ENCODE measurements at regions of chr12 and their contacts with region 1.

Region 1: GRCh38 chr12:131894313-131894860 is at the start of gene ULK1:
- DNase-seq: peak; percentile 82 to 84 (median 83)
- H3K4me3 ChIP-seq: peak within 1 kb of the TSS; percentile 63 to 94 (median 89)
- H3K4me3 Mint-ChIP-seq: peak within 1 kb of the TSS; percentile 87 to 93
- H3K27ac ChIP-seq: peak within 1 kb of the TSS; percentile 55 to 94
- H3K27ac Mint-ChIP-seq: peak within 1 kb of the TSS; percentile 87 to 95 (median 91)
- H3K4me1 ChIP-seq: peaks cover 20 to 24% of the 10 kb centered on the region in 2 donors
- H3K4me1 Mint-ChIP-seq: peaks cover 21% of the 10 kb centered on the region
- H3K27me3 ChIP-seq: no peaks in the 10 kb centered on the region
- H3K27me3 Mint-ChIP-seq: peaks cover 0 to 4% (median 3%) of the 10 kb centered on the region in 3 donors
- CTCF ChIP-seq: no peak
- polyA plus RNA-seq, gene ULK1: 1.0 to 75.1 (median 1.3) TPM

Region 2: GRCh38 chr12:131755305-131756113 is 138.9 kb before region 1 on chr12:
- intact Hi-C with region 1: no loop called
- DNase-seq: peak; percentile 9 to 27 (median 11)
- H3K4me3 ChIP-seq: no peak overlapping the region
- H3K4me3 Mint-ChIP-seq: no peak overlapping the region
- H3K27ac ChIP-seq: no peak overlapping the region
- H3K27ac Mint-ChIP-seq: no peak overlapping the region
- H3K4me1 ChIP-seq: no peaks in the 10 kb centered on the region
- H3K4me1 Mint-ChIP-seq: no peaks in the 10 kb centered on the region
- H3K27me3 ChIP-seq: no peaks in the 10 kb centered on the region
- H3K27me3 Mint-ChIP-seq: no peaks in the 10 kb centered on the region
- CTCF ChIP-seq: peak; percentile 63

Region 3: DNA sequence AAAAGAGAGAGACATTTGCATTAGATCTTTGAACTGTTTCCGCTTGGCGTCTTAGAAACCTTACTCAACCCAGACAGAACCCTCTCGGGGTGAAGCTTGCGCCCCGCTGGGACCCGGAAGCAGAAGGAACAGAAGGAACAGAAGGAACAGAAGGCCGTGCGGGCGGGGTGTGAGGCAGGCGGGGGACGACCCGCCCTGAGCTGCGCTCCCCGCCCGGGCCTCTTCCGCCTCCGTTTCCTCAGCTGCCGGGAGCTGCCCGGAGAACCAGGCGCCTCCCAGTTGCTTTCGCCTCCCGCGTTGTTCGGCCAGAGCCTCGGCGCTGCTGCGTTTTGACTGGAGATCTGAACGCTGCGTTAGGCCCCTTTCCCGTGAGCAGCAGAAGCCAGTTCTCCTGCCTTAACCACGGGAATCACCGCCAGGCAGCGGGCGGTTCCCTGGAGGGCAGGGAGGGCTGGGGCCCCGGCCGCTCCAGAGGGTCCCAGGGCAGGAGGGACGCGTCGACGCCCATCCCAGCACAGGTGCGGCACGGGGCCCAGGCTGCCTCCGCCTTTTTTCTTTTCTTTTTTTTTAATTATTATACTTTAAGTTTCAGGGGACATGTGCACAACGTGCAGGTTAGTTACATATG is 85.5 kb before region 1 on chr12:
- intact Hi-C with region 1: no loop called
- DNase-seq: peak; percentile 61 to 72 (median 70)
- H3K4me3 ChIP-seq: peak overlapping the region; percentile 12 to 60 (median 35)
- H3K4me3 Mint-ChIP-seq: peak overlapping the region; percentile 63 to 80
- H3K27ac ChIP-seq: peak overlapping the region; percentile 51 to 61
- H3K27ac Mint-ChIP-seq: peak overlapping the region; percentile 30 to 90 (median 87)
- H3K4me1 ChIP-seq: peaks cover 35 to 43% of the 10 kb centered on the region in 2 donors
- H3K4me1 Mint-ChIP-seq: peaks cover 32% of the 10 kb centered on the region
- H3K27me3 ChIP-seq: no peaks in the 10 kb centered on the region
- H3K27me3 Mint-ChIP-seq: peaks cover 0 to 6% (median 3%) of the 10 kb centered on the region in 3 donors
- CTCF ChIP-seq: no peak

Region 4: DNA sequence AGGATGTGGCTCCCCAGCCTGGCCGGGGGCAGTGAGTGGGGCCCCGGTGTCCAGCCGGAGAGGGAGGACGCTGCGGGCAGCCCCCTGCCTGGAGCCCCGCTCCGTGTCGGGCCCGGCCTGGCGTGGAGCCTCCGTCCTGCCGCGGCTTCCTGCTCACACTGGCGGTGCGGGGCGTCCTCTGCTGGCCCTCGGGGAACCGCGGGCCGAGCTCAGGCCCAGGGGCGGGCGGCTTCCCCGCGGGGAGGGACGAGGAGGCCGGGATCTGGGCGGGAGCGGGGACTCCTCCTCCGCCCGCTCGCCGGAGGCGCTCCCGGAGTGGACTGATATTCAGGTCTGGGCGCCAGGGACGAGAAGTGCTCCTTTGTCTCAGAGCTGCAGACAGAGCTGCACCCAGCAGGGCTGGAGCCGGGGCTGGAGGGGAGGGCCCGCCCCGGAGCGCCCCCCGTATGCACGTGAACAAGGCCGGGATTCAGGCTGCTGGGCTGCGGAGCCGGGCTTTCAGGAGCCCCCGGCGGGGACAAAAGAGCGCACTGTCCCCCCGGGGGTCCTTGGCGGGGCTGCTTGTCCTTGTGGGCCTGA is 64.0 kb before region 1 on chr12:
- intact Hi-C with region 1: no loop called
- DNase-seq: peak; percentile 58 to 69 (median 66)
- H3K4me3 ChIP-seq: peak overlapping the region; percentile 64 to 94 (median 69)
- H3K4me3 Mint-ChIP-seq: peak overlapping the region; percentile 69 to 81
- H3K27ac ChIP-seq: no peak overlapping the region
- H3K27ac Mint-ChIP-seq: no peak overlapping the region
- H3K4me1 ChIP-seq: peaks cover 29 to 38% of the 10 kb centered on the region in 2 donors
- H3K4me1 Mint-ChIP-seq: peaks cover 38% of the 10 kb centered on the region
- H3K27me3 ChIP-seq: peaks cover 0 to 15% of the 10 kb centered on the region in 2 donors
- H3K27me3 Mint-ChIP-seq: peaks cover 2 to 35% (median 35%) of the 10 kb centered on the region in 3 donors
- CTCF ChIP-seq: peak; percentile 88

Region 5: GRCh38 chr12:131860562-131861291 is 33.7 kb before region 1 on chr12:
- intact Hi-C with region 1: loop called (anchors 5 kb)
- DNase-seq: peak; percentile 95 to 96 (median 95)
- H3K4me3 ChIP-seq: peak overlapping the region; percentile 35 to 71 (median 37)
- H3K4me3 Mint-ChIP-seq: peak overlapping the region; percentile 78 to 89
- H3K27ac ChIP-seq: peak overlapping the region; percentile 85 to 92
- H3K27ac Mint-ChIP-seq: peak overlapping the region; percentile 97 to 99 (median 98)
- H3K4me1 ChIP-seq: peaks cover 42 to 45% of the 10 kb centered on the region in 2 donors
- H3K4me1 Mint-ChIP-seq: peaks cover 41% of the 10 kb centered on the region
- H3K27me3 ChIP-seq: no peaks in the 10 kb centered on the region
- H3K27me3 Mint-ChIP-seq: peaks cover 6 to 10% (median 8%) of the 10 kb centered on the region in 3 donors
- CTCF ChIP-seq: no peak

Region 6: GRCh38 chr12:131928711-131929580 is 34.6 kb after region 1 on chr12 and contains the start of gene PUS1:
- intact Hi-C with region 1: loop called (anchors 2 kb)
- DNase-seq: peak; percentile 88 to 94 (median 94)
- H3K4me3 ChIP-seq: peak within 1 kb of the TSS; percentile 73 to 96 (median 82)
- H3K4me3 Mint-ChIP-seq: peak within 1 kb of the TSS; percentile 89 to 93
- H3K27ac ChIP-seq: peak within 1 kb of the TSS; percentile 12 to 89
- H3K27ac Mint-ChIP-seq: peak within 1 kb of the TSS; percentile 88 to 95 (median 90)
- H3K4me1 ChIP-seq: peaks cover 25 to 28% of the 10 kb centered on the region in 2 donors
- H3K4me1 Mint-ChIP-seq: peaks cover 28% of the 10 kb centered on the region
- H3K27me3 ChIP-seq: no peaks in the 10 kb centered on the region
- H3K27me3 Mint-ChIP-seq: peaks cover 0 to 9% (median 4%) of the 10 kb centered on the region in 3 donors
- CTCF ChIP-seq: no peak
- polyA plus RNA-seq, gene PUS1: 5.1 to 30.9 (median 6.9) TPM